Activated CD8-positive, alpha-beta memory T cell treated with anti-CD3 and anti-CD28 coated beads, Interleukin-2, amount 10 ng/mL, durations not matched to agents 7 days and 5 days (primary cell): ENCODE measurements at regions of chr12 and their contacts with region 1.

Region 1: GRCh38 chr12:107093417-107094182 is at the start of gene CRY1:
- DNase-seq: peak; percentile 94
- ATAC-seq: peak; percentile 89
- H3K4me3 Mint-ChIP-seq: no peak within 1 kb of the TSS
- H3K27ac Mint-ChIP-seq: no peak within 1 kb of the TSS
- H3K4me1 Mint-ChIP-seq: peaks cover 4% of the 10 kb centered on the region
- H3K27me3 Mint-ChIP-seq: peaks cover 3% of the 10 kb centered on the region
- total RNA-seq, gene CRY1: 15.2 to 20.6 TPM

Region 2: DNA sequence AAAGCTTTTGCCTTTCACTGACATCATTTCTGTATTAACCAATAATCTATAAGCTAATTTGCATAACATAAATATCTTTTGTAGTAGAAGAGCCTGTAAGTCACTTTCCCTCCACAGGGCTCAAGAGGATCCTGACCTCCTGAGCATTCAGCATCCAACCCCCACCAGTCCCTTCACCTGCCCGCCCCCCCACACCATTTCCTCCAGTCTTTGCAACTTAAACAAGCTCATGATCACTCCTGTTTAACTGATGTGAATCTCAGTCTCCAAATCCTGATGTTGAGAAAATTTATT is 11.8 kb after region 1 on chr12:
- CTCF ChIA-PET with region 1: interaction called, 67 read pairs
- DNase-seq: no peak
- ATAC-seq: no peak
- H3K4me3 Mint-ChIP-seq: no peak overlapping the region
- H3K27ac Mint-ChIP-seq: no peak overlapping the region
- H3K4me1 Mint-ChIP-seq: no peaks in the 10 kb centered on the region
- H3K27me3 Mint-ChIP-seq: peaks cover 18% of the 10 kb centered on the region